SK-N-SH (cell line): ENCODE measurements at regions of chr17 and their contacts with region 1.

Region 1: GRCh38 chr17:31842183-31843069 is 16.6 kb downstream of the COPRS start:
- DNase-seq: peak; percentile 85
- H3K4me3 ChIP-seq: no peak overlapping the region; a peak in 1 of 4 replicates
- H3K27ac ChIP-seq: peak overlapping the region; percentile 28 to 53; a peak in 3 of 4 replicates
- H3K4me1 ChIP-seq: peaks cover 4 to 11% of the 10 kb centered on the region in 2 experiments; a peak in 2 of 4 replicates
- H3K27me3 ChIP-seq: no peaks in the 10 kb centered on the region
- CTCF ChIP-seq: peak; percentile 97
- EP300 ChIP-seq: no peak
- RAD21 ChIP-seq: peak; percentile 98

Region 2: DNA sequence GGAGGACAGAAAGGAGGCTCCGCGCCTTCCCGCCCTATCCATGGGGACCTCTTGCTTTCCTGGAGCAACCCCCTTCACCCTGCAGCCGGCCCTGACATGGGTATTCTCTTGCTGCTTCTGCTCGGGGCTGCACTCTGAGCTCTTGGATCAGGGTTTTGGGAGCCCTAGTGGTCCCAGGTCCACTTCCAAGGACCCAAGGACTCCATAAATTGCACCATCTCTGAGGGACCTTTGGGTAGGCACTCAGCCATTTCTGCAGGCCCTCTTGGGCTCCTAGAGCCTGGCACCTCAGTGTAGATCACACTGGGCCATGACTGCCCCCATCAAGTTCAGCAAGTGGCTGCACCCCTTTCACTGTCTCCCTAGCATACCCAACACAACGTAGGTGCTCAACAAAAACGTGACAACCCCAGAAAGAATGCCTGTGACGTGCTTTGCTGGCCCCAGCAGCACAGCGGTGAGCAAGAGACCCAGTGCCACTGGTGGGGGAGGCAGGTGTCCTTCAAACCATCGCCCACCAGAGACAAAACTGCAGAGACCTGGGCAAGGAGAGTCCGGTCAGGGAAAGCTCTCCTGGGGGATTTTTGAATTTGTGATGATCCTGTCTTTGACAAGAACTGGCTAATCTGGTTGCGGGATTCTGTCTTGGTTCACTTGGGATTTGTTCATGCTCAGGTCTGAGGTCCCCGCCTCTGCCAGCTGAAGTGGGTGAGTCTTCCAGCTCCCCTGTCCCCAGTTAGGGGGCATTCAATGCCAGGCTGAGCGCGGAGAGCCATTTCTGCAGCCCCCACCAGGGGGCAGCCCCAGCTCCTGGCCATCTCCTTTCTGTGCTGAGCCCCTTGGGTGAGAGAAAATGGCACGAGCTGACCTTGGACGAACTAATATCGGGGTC is 453.4 kb before region 1 on chr17:
- CTCF ChIA-PET with region 1: interaction called, 31 read pairs
- POLR2A ChIA-PET with region 1: no interaction called
- DNase-seq: peak; percentile 83
- H3K4me3 ChIP-seq: no peak overlapping the region; a peak in 1 of 4 replicates
- H3K27ac ChIP-seq: no peak overlapping the region
- H3K4me1 ChIP-seq: peaks cover 0 to 29% of the 10 kb centered on the region in 2 experiments; a peak in 2 of 4 replicates
- H3K27me3 ChIP-seq: no peaks in the 10 kb centered on the region
- CTCF ChIP-seq: peak; percentile 74
- EP300 ChIP-seq: no peak
- RAD21 ChIP-seq: peak; percentile 77

Region 3: GRCh38 chr17:31533546-31534155 is 308.8 kb before region 1 on chr17:
- CTCF ChIA-PET with region 1: interaction called, 137 read pairs
- POLR2A ChIA-PET with region 1: no interaction called
- DNase-seq: peak; percentile 81
- H3K4me3 ChIP-seq: no peak overlapping the region
- H3K27ac ChIP-seq: peak overlapping the region in 1 of 2 experiments; percentile 66; a peak in 2 of 4 replicates
- H3K4me1 ChIP-seq: peaks cover 11 to 16% of the 10 kb centered on the region in 2 experiments; a peak in 3 of 4 replicates
- H3K27me3 ChIP-seq: no peaks in the 10 kb centered on the region
- CTCF ChIP-seq: peak; percentile 55
- EP300 ChIP-seq: no peak; a peak in 1 of 4 replicates
- RAD21 ChIP-seq: peak; percentile 67

Region 4: DNA sequence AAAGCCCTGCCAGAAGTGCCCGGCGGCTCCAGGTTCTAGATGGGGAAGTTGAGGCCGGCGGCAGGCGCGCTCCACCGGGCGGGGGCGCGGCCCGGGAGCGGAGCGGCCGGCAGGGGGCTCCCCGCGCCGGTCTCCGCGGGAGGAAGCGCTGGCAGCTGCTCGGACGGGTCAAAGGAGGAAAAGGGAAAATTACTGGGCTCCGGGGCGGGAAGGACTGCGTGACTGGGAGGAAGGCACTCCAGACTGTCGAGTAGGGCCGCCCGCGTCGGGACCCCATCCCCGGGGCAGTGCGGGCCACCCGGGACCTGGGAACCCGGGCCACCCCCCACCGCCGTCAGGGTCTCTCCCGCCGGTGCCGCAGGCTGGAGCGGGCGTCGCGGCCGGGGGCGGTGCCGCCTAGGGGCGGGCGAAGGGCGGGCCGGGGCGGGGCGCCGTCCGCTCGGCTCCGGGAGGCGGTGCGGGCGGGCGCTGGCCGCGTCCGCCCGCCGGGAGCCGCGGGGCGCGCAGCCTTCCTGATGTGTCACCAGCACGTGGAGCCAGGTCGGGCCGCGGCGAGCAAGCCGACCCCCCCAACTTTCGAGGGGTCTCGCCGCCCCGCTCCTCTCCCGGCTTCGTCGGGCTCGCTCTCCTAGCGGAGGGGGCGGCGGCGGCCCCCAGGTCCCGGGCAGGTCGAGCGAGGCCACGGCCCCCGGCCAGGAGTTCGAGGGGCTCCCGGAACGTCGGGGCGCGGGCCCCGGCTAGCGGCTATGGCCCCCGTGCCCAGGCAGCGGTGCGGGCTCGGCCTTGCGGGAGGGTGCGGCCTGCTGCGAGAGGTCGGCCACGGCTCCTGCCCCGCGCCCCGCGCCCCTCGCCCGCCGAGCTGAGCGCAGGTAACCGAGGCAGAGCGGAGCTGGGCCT is 283.4 kb before region 1 on chr17:
- CTCF ChIA-PET with region 1: interaction called, 338 read pairs
- POLR2A ChIA-PET with region 1: no interaction called
- DNase-seq: peak; percentile 95
- H3K4me3 ChIP-seq: peak overlapping the region; percentile 58; a peak in 3 of 4 replicates
- H3K27ac ChIP-seq: peak overlapping the region; percentile 71 to 86
- H3K4me1 ChIP-seq: peaks cover 6 to 25% of the 10 kb centered on the region in 2 experiments; a peak in 3 of 4 replicates
- H3K27me3 ChIP-seq: no peaks in the 10 kb centered on the region
- CTCF ChIP-seq: peak; percentile 97
- EP300 ChIP-seq: no peak
- RAD21 ChIP-seq: peak; percentile 77

Region 5: GRCh38 chr17:31587462-31587861 is 255.0 kb before region 1 on chr17:
- CTCF ChIA-PET with region 1: interaction called, 13 read pairs
- POLR2A ChIA-PET with region 1: no interaction called
- DNase-seq: no peak
- H3K4me3 ChIP-seq: no peak overlapping the region
- H3K27ac ChIP-seq: no peak overlapping the region
- H3K4me1 ChIP-seq: peaks cover 2 to 4% of the 10 kb centered on the region in 2 experiments; a peak in 3 of 4 replicates
- H3K27me3 ChIP-seq: no peaks in the 10 kb centered on the region
- CTCF ChIP-seq: no peak
- EP300 ChIP-seq: no peak
- RAD21 ChIP-seq: no peak

Region 6: GRCh38 chr17:31825961-31826691 is 16.3 kb before region 1 on chr17:
- CTCF ChIA-PET with region 1: interaction called, 89 read pairs
- POLR2A ChIA-PET with region 1: no interaction called
- DNase-seq: peak; percentile 45
- H3K4me3 ChIP-seq: no peak overlapping the region
- H3K27ac ChIP-seq: no peak overlapping the region
- H3K4me1 ChIP-seq: peaks cover 4 to 7% of the 10 kb centered on the region in 2 experiments; a peak in 2 of 4 replicates
- H3K27me3 ChIP-seq: no peaks in the 10 kb centered on the region
- CTCF ChIP-seq: no peak
- EP300 ChIP-seq: no peak
- RAD21 ChIP-seq: no peak